Uterus (tissue), 4 donors: ENCODE measurements at regions of chr11 and their contacts with region 1.

Region 1: GRCh38 chr11:111283945-111284481 is 14.3 kb upstream of the POU2AF3 start:
- DNase-seq: no peak
- H3K4me3 ChIP-seq: no peak overlapping the region
- H3K27ac ChIP-seq: no peak overlapping the region
- H3K4me1 ChIP-seq: no peaks in the 10 kb centered on the region
- H3K27me3 ChIP-seq: no peaks in the 10 kb centered on the region
- CTCF ChIP-seq: no peak
- POLR2A ChIP-seq: no peak

Region 2: GRCh38 chr11:111336582-111337256 is 52.7 kb after region 1 on chr11:
- intact Hi-C with region 1: no loop called
- DNase-seq: no peak
- H3K4me3 ChIP-seq: no peak overlapping the region
- H3K27ac ChIP-seq: no peak overlapping the region
- H3K4me1 ChIP-seq: peaks cover 0 to 4% of the 10 kb centered on the region in 2 donors
- H3K27me3 ChIP-seq: no peaks in the 10 kb centered on the region
- CTCF ChIP-seq: no peak
- POLR2A ChIP-seq: no peak

Region 3: DNA sequence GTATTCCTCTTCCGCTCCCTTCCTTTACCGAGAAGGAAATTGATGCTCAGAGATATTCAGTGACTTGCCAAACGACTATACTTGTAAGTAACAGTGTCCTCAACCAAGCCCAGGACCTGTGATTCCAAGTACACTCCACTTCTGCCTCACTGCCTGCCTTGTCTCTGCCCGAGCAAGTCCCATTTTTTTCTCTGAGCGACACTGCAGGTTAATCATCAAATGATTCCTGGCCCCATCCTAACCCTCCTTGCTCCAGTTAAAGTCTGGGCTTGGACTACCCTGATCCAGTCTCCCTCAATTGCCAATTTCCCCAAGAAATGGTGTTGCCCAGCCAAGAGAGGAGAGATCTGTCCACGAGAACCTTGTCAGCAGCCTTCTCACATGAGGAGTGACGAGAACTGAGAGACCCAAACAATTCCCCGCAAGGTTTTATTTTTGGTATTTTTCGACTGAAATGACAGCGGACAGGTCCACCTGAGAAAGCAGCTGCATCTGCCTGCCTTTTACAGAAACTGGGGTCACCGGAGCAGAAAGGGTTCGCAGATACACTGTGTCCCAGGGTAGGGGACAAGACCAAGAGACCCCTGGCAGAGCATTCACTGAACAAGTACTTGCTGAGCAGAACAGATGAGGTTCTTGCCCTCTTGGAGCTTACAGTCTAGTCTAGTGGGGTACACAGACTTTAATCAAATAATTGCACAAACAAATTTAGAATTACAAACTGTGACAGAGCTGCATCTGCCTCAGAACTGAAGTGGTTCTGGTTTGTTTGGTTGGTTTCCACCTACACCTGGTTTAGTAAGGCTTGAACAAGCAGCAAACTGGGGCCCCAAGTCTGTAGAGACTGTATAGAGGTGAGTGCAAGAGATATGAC is 83.6 kb after region 1 on chr11:
- intact Hi-C with region 1: no loop called
- DNase-seq: no peak
- H3K4me3 ChIP-seq: no peak overlapping the region
- H3K27ac ChIP-seq: no peak overlapping the region
- H3K4me1 ChIP-seq: no peaks in the 10 kb centered on the region
- H3K27me3 ChIP-seq: no peaks in the 10 kb centered on the region
- CTCF ChIP-seq: no peak
- POLR2A ChIP-seq: no peak

Region 4: GRCh38 chr11:111446404-111447111 is 162.5 kb after region 1 on chr11:
- intact Hi-C with region 1: loop called (anchors 5 kb)
- DNase-seq: peak; percentile 71 to 84
- H3K4me3 ChIP-seq: no peak overlapping the region
- H3K27ac ChIP-seq: peak overlapping the region; percentile 41 to 53
- H3K4me1 ChIP-seq: no peaks in the 10 kb centered on the region
- H3K27me3 ChIP-seq: no peaks in the 10 kb centered on the region
- CTCF ChIP-seq: peak; percentile 73 to 96 (median 88)
- POLR2A ChIP-seq: no peak